ENCODE measurements at regions of chr5 and their contacts with region 1.

Region 1: DNA sequence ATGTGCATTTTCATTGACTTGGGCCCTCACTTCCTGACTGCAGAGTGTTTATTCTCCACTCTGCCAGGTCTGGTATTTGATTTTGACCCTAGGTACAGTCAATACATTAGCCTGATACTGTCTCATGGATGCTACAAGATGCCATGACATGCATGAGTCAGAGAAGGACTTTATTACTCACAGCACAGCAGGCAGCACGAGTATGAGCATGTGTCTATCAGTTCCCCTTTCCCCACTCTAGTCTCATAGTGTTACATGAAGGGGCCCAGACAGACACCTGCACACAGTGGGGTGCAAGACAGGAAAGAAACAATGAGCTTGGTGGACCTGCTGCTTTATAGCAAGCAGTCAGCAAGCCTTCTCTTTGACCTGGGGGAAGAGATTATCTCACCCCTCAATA is 19.6 kb downstream of the ITGA2 start:
- DNase-seq: peak; percentile 20
- H3K4me3 Mint-ChIP-seq: peak overlapping the region; percentile 41
- H3K27ac Mint-ChIP-seq: peak overlapping the region; percentile 87
- H3K4me1 Mint-ChIP-seq: peaks cover 75% of the 10 kb centered on the region
- H3K27me3 Mint-ChIP-seq: peaks cover 5% of the 10 kb centered on the region

Region 2: GRCh38 chr5:52580921-52581320 is 427.8 kb before region 1 on chr5:
- intact Hi-C with region 1: no loop called
- DNase-seq: no peak
- H3K4me3 Mint-ChIP-seq: no peak overlapping the region
- H3K27ac Mint-ChIP-seq: no peak overlapping the region
- H3K4me1 Mint-ChIP-seq: no peaks in the 10 kb centered on the region
- H3K27me3 Mint-ChIP-seq: peaks cover under 1% of the 10 kb centered on the region

Region 3: GRCh38 chr5:52743970-52744369 is 264.8 kb before region 1 on chr5:
- intact Hi-C with region 1: loop called (anchors 1 kb)
- DNase-seq: peak; percentile 66
- H3K4me3 Mint-ChIP-seq: peak overlapping the region; percentile 49
- H3K27ac Mint-ChIP-seq: peak overlapping the region; percentile 78
- H3K4me1 Mint-ChIP-seq: peaks cover 80% of the 10 kb centered on the region
- H3K27me3 Mint-ChIP-seq: no peaks in the 10 kb centered on the region

Region 4: DNA sequence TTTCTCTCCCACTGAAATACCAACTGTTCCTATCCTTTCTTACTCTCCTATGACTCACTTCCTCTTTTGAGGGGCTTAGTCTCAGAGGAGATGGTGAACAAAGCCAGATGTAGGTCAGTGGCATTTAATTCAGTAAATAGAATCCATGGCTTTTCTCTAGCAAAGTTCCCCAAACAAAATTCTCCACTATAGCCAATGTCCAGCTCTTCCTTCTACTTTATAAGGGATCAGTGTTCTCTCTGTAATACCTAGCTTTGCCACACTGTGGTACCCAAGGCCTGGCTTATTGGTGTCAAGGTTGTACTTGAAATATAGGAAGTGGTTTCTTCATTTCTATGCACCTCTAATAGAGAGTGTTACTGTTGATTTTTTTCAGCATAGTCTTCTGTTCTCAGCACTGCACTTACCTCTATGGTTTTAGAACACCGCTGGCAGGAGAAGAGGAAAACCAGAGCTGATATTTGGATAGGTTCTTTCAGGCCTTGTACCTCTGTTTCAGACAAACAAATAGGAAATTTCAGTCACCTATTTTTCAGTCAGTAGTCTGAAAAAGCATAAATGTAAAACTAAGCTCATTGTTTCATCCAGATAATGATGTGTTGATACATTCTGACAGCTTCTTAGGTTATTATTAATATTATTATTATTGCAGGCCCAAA is 60.2 kb before region 1 on chr5:
- intact Hi-C with region 1: loop called (anchors 1 kb)
- DNase-seq: peak; percentile 51
- H3K4me3 Mint-ChIP-seq: no peak overlapping the region
- H3K27ac Mint-ChIP-seq: no peak overlapping the region
- H3K4me1 Mint-ChIP-seq: peaks cover 31% of the 10 kb centered on the region
- H3K27me3 Mint-ChIP-seq: no peaks in the 10 kb centered on the region

Region 5: DNA sequence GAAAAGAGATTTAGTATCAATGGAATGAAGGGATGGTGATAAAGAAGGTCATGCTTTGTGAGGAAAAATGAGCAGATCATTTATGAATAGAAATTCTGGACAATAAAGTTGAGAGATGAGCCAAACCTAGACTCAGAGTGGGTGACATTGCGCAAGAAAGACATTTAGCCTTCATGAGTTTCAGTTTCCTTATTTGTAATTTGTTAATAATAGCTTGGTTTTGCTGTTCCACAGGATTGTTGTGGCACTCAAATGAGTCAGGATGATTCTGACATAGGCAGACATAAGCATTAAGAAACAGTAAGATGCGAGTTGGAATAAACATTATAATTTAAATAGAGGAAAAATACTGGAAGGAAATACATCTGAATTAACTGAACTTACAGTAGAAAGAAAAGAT is 15.2 kb after region 1 on chr5:
- intact Hi-C with region 1: loop called (anchors 1 kb)
- DNase-seq: no peak
- H3K4me3 Mint-ChIP-seq: no peak overlapping the region
- H3K27ac Mint-ChIP-seq: no peak overlapping the region
- H3K4me1 Mint-ChIP-seq: no peaks in the 10 kb centered on the region
- H3K27me3 Mint-ChIP-seq: no peaks in the 10 kb centered on the region

Region 6: GRCh38 chr5:53041071-53041692 is 32.4 kb after region 1 on chr5:
- intact Hi-C with region 1: loop called (anchors 1 kb)
- DNase-seq: peak; percentile 22
- H3K4me3 Mint-ChIP-seq: peak overlapping the region; percentile 57
- H3K27ac Mint-ChIP-seq: peak overlapping the region; percentile 75
- H3K4me1 Mint-ChIP-seq: peaks cover 70% of the 10 kb centered on the region
- H3K27me3 Mint-ChIP-seq: no peaks in the 10 kb centered on the region